ENCODE measurements at regions of chr4 and their contacts with region 1.

Region 1: DNA sequence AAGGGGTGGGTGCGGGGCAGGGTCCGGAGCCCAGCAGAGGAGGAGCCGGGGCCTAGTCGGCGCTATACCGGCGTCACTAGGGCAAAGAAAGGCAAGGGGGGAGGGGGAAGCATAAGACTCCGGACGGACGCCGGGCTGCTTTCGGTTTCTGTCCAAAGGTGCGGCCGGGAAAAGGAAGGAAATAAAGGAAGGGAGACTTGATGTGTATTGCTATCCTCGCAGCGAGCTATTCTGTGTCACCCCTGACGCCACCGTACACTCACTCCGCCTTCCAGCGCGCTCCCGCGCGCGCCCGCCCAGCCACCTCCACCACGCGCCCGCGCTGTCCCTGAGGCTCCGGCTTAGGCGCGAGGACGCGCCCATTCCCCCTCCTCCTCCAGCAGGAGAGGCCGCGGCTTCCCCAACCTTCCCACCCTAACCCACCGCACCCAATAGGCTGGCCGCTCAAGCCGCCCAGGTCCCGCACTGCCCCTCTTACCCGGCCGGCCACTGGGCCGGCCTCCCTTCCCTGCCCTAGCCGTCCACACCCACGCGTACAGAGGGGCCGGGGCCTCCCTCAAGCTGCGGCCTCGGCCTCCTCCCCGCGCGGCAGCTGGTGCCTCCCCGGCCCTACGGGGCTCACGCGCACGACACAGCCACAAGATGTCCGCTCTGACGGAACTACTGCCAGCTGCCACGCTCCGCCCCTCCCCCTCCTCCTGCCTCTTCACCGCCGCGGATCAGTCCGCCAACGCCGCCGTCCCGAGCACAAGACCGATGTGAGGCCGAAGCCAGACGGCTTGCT is at the start of gene UBE2D3:
- DNase-seq: peak; percentile 90 to 98 (median 95)
- ATAC-seq: peak; percentile 49
- H3K4me3 ChIP-seq: peak within 1 kb of the TSS; percentile 80 to 90
- H3K4me3 Mint-ChIP-seq: no peak within 1 kb of the TSS
- H3K27ac ChIP-seq: peak within 1 kb of the TSS; percentile 99 to 100
- H3K27ac Mint-ChIP-seq: no peak within 1 kb of the TSS
- H3K4me1 ChIP-seq: peaks cover 37% of the 10 kb centered on the region
- H3K4me1 Mint-ChIP-seq: peaks cover 39% of the 10 kb centered on the region
- H3K27me3 ChIP-seq: no peaks in the 10 kb centered on the region
- H3K27me3 Mint-ChIP-seq: no peaks in the 10 kb centered on the region
- CTCF ChIP-seq: no peak
- total RNA-seq, gene UBE2D3: 752 to 758 TPM

Region 2: GRCh38 chr4:102610007-102610406 is 217.1 kb before region 1 on chr4:
- CTCF ChIA-PET with region 1: interaction called, 3 read pairs
- POLR2A ChIA-PET with region 1: interaction called, 4 read pairs
- intact Hi-C with region 1: loop called in 1 of 2 experiments (anchors 5 kb)
- DNase-seq: peak in 1 of 9 experiments; percentile 41
- ATAC-seq: no peak
- H3K4me3 ChIP-seq: no peak overlapping the region
- H3K4me3 Mint-ChIP-seq: no peak overlapping the region
- H3K27ac ChIP-seq: peak overlapping the region in 1 of 2 experiments; percentile 90
- H3K27ac Mint-ChIP-seq: peak overlapping the region; percentile 39
- H3K4me1 ChIP-seq: peaks cover 67% of the 10 kb centered on the region
- H3K4me1 Mint-ChIP-seq: peaks cover 78% of the 10 kb centered on the region
- H3K27me3 ChIP-seq: no peaks in the 10 kb centered on the region
- H3K27me3 Mint-ChIP-seq: no peaks in the 10 kb centered on the region
- CTCF ChIP-seq: no peak

Region 3: DNA sequence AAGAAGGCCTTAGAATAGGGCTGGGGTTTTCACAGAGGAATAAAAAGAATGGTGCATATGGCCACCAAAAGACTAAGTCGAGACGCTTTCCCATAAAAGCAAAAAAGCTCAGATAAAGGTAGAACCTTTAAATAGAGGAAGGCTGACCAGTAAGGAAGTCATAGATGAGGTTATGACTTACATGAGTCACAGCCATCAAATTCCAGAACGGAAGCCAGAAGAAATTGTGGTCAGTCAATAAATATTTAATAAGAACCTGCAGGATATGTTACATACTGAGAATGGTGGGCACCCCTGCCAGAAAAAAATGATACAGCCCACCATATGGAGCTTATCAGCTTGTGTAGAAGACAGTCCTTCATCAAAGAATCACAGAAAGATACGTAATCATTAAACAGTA is 186.4 kb before region 1 on chr4:
- CTCF ChIA-PET with region 1: no interaction called
- POLR2A ChIA-PET with region 1: no interaction called
- intact Hi-C with region 1: no loop called
- DNase-seq: no peak
- ATAC-seq: no peak
- H3K4me3 ChIP-seq: no peak overlapping the region
- H3K4me3 Mint-ChIP-seq: no peak overlapping the region
- H3K27ac ChIP-seq: no peak overlapping the region
- H3K27ac Mint-ChIP-seq: peak overlapping the region; percentile 21
- H3K4me1 ChIP-seq: no peaks in the 10 kb centered on the region
- H3K4me1 Mint-ChIP-seq: peaks cover 29% of the 10 kb centered on the region
- H3K27me3 ChIP-seq: no peaks in the 10 kb centered on the region
- H3K27me3 Mint-ChIP-seq: no peaks in the 10 kb centered on the region
- CTCF ChIP-seq: no peak

Region 4: GRCh38 chr4:102792361-102792936 is 34.6 kb before region 1 on chr4:
- CTCF ChIA-PET with region 1: no interaction called
- POLR2A ChIA-PET with region 1: interaction called, 3 read pairs
- intact Hi-C with region 1: loop called in 1 of 2 experiments (anchors 2 kb)
- DNase-seq: no peak
- ATAC-seq: peak; percentile 18
- H3K4me3 ChIP-seq: no peak overlapping the region
- H3K4me3 Mint-ChIP-seq: no peak overlapping the region
- H3K27ac ChIP-seq: no peak overlapping the region
- H3K27ac Mint-ChIP-seq: peak overlapping the region; percentile 8
- H3K4me1 ChIP-seq: no peaks in the 10 kb centered on the region
- H3K4me1 Mint-ChIP-seq: peaks cover 25% of the 10 kb centered on the region
- H3K27me3 ChIP-seq: no peaks in the 10 kb centered on the region
- H3K27me3 Mint-ChIP-seq: no peaks in the 10 kb centered on the region
- CTCF ChIP-seq: no peak

Region 5: DNA sequence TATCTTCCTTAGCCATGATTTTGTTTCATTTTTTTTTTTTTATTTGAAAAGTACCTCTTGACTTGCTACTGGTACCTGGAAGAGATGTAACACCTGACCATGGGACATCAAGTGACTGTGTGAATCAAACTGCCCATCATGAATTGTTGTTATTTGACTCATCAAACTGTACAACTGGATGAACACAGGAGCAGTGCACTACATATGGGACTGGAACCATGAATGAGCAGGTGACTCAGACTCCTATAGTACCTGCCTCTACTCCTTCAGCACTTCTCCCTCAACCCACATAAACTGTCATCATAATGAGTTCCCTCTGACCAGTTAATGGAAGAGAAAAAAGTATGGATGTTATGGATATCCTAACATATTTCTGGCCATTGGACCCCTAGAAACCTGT is 16.2 kb after region 1 on chr4:
- CTCF ChIA-PET with region 1: interaction called, 4 read pairs
- POLR2A ChIA-PET with region 1: interaction called, 10 read pairs
- intact Hi-C with region 1: no loop called
- DNase-seq: no peak
- ATAC-seq: no peak
- H3K4me3 ChIP-seq: no peak overlapping the region
- H3K4me3 Mint-ChIP-seq: no peak overlapping the region
- H3K27ac ChIP-seq: no peak overlapping the region
- H3K27ac Mint-ChIP-seq: no peak overlapping the region
- H3K4me1 ChIP-seq: no peaks in the 10 kb centered on the region
- H3K4me1 Mint-ChIP-seq: no peaks in the 10 kb centered on the region
- H3K27me3 ChIP-seq: no peaks in the 10 kb centered on the region
- H3K27me3 Mint-ChIP-seq: no peaks in the 10 kb centered on the region
- CTCF ChIP-seq: no peak

Region 6: DNA sequence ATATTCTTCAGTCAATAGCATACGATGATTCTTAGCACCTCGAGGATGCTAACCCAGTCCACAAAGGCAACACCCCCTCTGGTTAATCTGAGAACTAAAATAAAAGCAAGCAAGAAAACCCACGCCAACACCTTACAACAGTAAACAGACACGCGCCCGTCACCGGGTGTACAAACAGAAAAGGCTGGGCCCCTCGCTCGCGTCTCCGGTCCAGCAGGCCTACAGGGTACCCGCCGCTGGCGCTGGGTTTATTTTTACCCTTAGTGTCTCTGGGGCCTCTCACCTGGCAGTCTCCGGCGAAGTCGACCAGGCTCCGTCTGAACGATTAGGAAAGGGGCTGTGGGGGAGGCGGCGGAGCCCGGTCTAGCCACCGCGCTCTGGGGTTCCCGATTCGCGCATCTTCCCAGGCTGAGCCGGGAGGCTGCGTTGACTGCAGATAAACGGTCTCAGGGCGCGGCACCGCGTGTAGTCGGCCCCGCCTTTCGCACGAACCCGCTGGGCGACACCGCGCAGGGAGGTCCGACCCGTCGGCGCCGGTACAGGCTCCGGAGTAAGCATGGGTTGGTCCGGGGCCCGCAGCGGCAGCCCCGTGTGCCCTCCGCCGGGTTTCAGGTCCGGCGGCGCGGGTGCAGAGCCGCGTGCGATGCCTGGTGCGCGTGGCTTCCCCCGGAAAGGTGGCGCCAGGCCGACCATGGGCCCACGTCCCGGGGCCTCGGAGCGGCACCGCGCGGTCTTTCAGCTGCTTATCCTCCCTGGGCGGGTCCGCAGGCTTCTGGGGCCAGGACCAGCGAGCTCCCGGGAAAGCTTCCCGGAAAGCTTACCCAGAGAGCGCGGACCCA is 249.0 kb after region 1 on chr4:
- CTCF ChIA-PET with region 1: no interaction called
- POLR2A ChIA-PET with region 1: interaction called, 5 read pairs
- intact Hi-C with region 1: loop called in 1 of 2 experiments (anchors 5 kb)
- DNase-seq: peak; percentile 39 to 84 (median 64)
- ATAC-seq: peak; percentile 79
- H3K4me3 ChIP-seq: peak overlapping the region; percentile 80
- H3K4me3 Mint-ChIP-seq: peak overlapping the region; percentile 94
- H3K27ac ChIP-seq: peak overlapping the region; percentile 89 to 95
- H3K27ac Mint-ChIP-seq: peak overlapping the region; percentile 99
- H3K4me1 ChIP-seq: peaks cover 25% of the 10 kb centered on the region
- H3K4me1 Mint-ChIP-seq: peaks cover 49% of the 10 kb centered on the region
- H3K27me3 ChIP-seq: no peaks in the 10 kb centered on the region
- H3K27me3 Mint-ChIP-seq: no peaks in the 10 kb centered on the region
- CTCF ChIP-seq: no peak

Measured in CD8-positive, alpha-beta T cell (primary cell).